ENCODE measurements at regions of chr22 and their contacts with region 1.

Region 1: DNA sequence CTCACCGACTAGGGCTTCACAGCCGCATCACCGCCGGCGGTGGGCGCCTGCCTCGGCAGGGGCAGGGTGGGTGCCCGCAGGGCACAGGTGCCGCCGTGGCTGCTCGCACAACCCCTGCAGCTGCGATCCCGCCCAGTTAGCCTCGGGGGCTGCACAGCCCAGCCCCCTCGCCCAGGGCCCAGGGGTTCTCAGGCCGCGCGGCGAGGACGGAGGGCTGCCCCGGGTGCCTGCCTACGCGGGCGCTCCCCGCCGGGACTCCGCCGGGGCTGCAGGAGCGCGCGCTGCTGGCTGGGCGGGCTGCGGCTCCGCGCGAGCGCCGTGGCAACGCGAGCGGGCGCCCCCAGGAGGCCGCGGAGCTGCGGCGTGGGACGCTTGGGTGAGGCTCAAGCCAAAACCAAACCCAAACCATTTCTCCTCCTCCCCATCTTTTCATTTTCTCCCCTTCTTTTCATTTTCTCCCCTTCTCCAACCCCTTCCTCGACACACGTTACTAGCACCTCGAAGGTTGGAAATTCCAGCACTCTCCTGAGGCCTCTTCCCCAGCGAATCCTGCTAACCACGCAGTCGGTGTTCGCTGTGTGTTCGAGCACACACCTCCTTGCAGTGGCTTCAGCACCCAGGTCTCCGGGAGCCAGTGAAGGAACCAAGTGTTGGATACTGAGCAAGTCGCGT is at the start of gene MICAL3:
- DNase-seq: peak in 9 of 10 donors; percentile 57 to 87 (median 67)
- H3K4me3 ChIP-seq: peak within 1 kb of the TSS; percentile 65 to 96 (median 86)
- H3K27ac ChIP-seq: peak within 1 kb of the TSS; percentile 59 to 97 (median 93)
- H3K27me3 ChIP-seq: no peaks in the 10 kb centered on the region
- CTCF ChIP-seq: peak in 54 of 56 donors; percentile 23 to 87 (median 60)
- total RNA-seq, gene MICAL3: 126 to 274 (median 183) TPM

Region 2: DNA sequence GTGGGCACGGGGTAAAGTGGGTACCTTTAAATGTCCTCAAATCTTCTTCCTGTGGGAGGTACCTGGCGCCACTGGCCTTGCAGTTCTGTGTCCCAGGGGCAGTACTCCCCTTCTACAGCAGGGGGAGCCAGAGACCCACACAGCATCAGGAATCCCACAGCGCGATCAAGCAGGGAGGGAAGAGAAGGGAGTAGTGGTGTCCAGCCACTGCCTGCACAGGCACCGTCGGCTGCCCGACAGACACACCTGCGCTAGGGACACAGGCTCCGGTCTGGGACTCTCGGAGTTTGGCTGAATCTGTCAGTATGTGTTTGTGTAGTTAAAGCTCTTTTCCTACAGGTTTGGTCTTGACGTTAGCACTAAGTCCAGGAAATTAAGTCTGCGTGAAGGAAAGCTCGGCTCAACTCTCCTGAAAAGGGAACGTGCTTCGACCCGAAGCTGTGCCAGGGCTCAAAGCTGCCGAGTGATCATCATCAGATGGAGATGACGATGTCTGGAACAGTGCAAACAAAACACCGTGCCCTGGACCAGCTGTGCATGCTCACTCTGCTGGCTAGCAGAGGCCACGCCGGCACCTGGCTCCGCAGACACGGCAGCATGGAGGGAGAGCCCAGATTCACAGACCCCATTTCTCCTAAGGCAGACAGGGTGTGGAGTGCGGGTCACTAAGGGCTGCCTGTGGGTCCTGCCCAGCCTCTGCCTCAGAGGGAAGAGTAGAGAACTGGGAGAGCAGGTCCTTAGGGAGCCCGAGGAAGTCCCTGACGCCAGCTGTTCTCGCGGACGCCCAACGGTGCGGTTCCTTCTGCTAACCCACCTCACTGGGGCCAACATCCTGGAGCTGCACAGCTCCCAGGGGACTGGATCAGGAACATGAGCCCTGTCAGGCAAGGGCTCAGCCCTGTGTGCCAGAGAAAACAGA is 194.1 kb before region 1 on chr22:
- intact Hi-C with region 1: loop called in 1 of 2 experiments (anchors 5 kb)
- DNase-seq: peak; percentile 74 to 94 (median 89)
- H3K4me3 ChIP-seq: no peak overlapping the region
- H3K27ac ChIP-seq: peak overlapping the region in 57 of 59 donors; percentile 5 to 88 (median 75)
- H3K27me3 ChIP-seq: no peaks in the 10 kb centered on the region
- CTCF ChIP-seq: peak; percentile 93 to 100 (median 99)

Region 3: GRCh38 chr22:18001040-18001893 is 23.1 kb before region 1 on chr22:
- intact Hi-C with region 1: loop called (anchors 1 to 2 kb)
- DNase-seq: peak; percentile 82 to 92 (median 89)
- H3K4me3 ChIP-seq: peak overlapping the region; percentile 56 to 96 (median 83)
- H3K27ac ChIP-seq: peak overlapping the region; percentile 76 to 99 (median 97)
- H3K27me3 ChIP-seq: no peaks in the 10 kb centered on the region
- CTCF ChIP-seq: peak in 52 of 56 donors; percentile 12 to 79 (median 48)

Region 4: GRCh38 chr22:18044548-18045271 is 20.3 kb after region 1 on chr22:
- intact Hi-C with region 1: loop called in 1 of 2 experiments (anchors 2 kb)
- DNase-seq: peak in 9 of 10 donors; percentile 89 to 97 (median 91)
- H3K4me3 ChIP-seq: peak overlapping the region in 22 of 59 donors; percentile 2 to 46 (median 18)
- H3K27ac ChIP-seq: peak overlapping the region; percentile 79 to 100 (median 98)
- H3K27me3 ChIP-seq: no peaks in the 10 kb centered on the region
- CTCF ChIP-seq: peak in 13 of 56 donors; percentile 6 to 29 (median 17)

Region 5: DNA sequence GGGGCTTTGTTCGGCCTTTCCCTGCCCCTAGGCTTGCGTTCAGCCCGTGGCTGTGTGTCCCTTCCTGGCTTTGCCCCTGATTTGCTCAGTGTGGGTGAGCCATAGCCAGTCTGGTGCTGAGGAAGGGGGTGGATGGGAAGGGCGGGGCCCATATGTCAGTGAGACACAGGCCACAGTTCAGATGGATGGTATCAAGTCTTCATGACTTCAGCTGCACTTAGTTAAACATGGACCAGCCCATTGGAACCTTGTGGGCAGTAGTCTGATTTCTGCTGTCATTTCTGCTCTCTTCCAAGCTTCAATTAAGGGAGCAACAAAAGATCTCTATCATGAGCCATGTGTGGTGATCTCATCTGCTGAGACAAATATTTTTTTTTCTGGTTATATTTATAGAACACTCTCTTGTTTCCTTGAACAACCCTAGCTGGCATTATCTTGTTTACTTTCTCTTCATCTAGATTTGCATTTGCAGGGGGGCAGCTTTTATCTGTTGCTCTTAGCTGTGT is 31.8 kb after region 1 on chr22:
- intact Hi-C with region 1: loop called in 1 of 2 experiments (anchors 1 kb)
- DNase-seq: peak; percentile 30 to 83 (median 70)
- H3K4me3 ChIP-seq: peak overlapping the region in 4 of 59 donors; percentile 7 to 24 (median 12)
- H3K27ac ChIP-seq: peak overlapping the region; percentile 82 to 99 (median 96)
- H3K27me3 ChIP-seq: no peaks in the 10 kb centered on the region
- CTCF ChIP-seq: peak in 1 of 56 donors; percentile 12

Region 6: GRCh38 chr22:18070556-18071306 is 46.3 kb after region 1 on chr22:
- intact Hi-C with region 1: no loop called
- DNase-seq: no peak
- H3K4me3 ChIP-seq: no peak overlapping the region
- H3K27ac ChIP-seq: no peak overlapping the region
- H3K27me3 ChIP-seq: no peaks in the 10 kb centered on the region
- CTCF ChIP-seq: peak in 5 of 56 donors; percentile 8 to 28 (median 10)

Region 7: GRCh38 chr22:18085188-18085587 is 60.8 kb after region 1 on chr22:
- intact Hi-C with region 1: no loop called
- DNase-seq: no peak
- H3K4me3 ChIP-seq: no peak overlapping the region
- H3K27ac ChIP-seq: no peak overlapping the region
- H3K27me3 ChIP-seq: no peaks in the 10 kb centered on the region
- CTCF ChIP-seq: no peak

Region 8: GRCh38 chr22:18136563-18137320 is 112.3 kb after region 1 on chr22:
- intact Hi-C with region 1: no loop called
- DNase-seq: no peak
- H3K4me3 ChIP-seq: no peak overlapping the region
- H3K27ac ChIP-seq: no peak overlapping the region
- H3K27me3 ChIP-seq: no peaks in the 10 kb centered on the region
- CTCF ChIP-seq: no peak